ENCODE measurements at regions of chr7 and their contacts with region 1.

Region 1: GRCh38 chr7:3427957-3428356 is 126.9 kb downstream of the SDK1 start:
- DNase-seq: peak in 3 of 14 experiments; percentile 1 to 22 (median 12)
- ATAC-seq: no peak
- H3K4me3 ChIP-seq: no peak overlapping the region
- H3K4me3 Mint-ChIP-seq: peak overlapping the region; percentile 31
- H3K27ac ChIP-seq: no peak overlapping the region
- H3K27ac Mint-ChIP-seq: no peak overlapping the region
- H3K4me1 ChIP-seq: no peaks in the 10 kb centered on the region
- H3K4me1 Mint-ChIP-seq: peaks cover 4% of the 10 kb centered on the region
- H3K27me3 ChIP-seq: no peaks in the 10 kb centered on the region
- H3K27me3 Mint-ChIP-seq: no peaks in the 10 kb centered on the region
- CTCF ChIP-seq: no peak

Region 2: GRCh38 chr7:3356173-3356572 is 71.8 kb before region 1 on chr7:
- CTCF ChIA-PET with region 1: no interaction called
- POLR2A ChIA-PET with region 1: no interaction called
- intact Hi-C with region 1: loop called in 1 of 2 experiments (anchors 2 kb)
- DNase-seq: no peak
- ATAC-seq: no peak
- H3K4me3 ChIP-seq: no peak overlapping the region
- H3K4me3 Mint-ChIP-seq: no peak overlapping the region
- H3K27ac ChIP-seq: no peak overlapping the region
- H3K27ac Mint-ChIP-seq: no peak overlapping the region
- H3K4me1 ChIP-seq: no peaks in the 10 kb centered on the region
- H3K4me1 Mint-ChIP-seq: no peaks in the 10 kb centered on the region
- H3K27me3 ChIP-seq: no peaks in the 10 kb centered on the region
- H3K27me3 Mint-ChIP-seq: peaks cover 5% of the 10 kb centered on the region
- CTCF ChIP-seq: no peak

Region 3: GRCh38 chr7:3461923-3462322 is 34.0 kb after region 1 on chr7:
- CTCF ChIA-PET with region 1: no interaction called
- POLR2A ChIA-PET with region 1: no interaction called
- intact Hi-C with region 1: loop called in 1 of 2 experiments (anchors 5 kb)
- DNase-seq: peak; percentile 45 to 88 (median 64)
- ATAC-seq: peak; percentile 90
- H3K4me3 ChIP-seq: no peak overlapping the region
- H3K4me3 Mint-ChIP-seq: peak overlapping the region; percentile 56
- H3K27ac ChIP-seq: peak overlapping the region; percentile 18 to 46
- H3K27ac Mint-ChIP-seq: peak overlapping the region; percentile 87
- H3K4me1 ChIP-seq: peaks cover 15% of the 10 kb centered on the region
- H3K4me1 Mint-ChIP-seq: peaks cover 59% of the 10 kb centered on the region
- H3K27me3 ChIP-seq: no peaks in the 10 kb centered on the region
- H3K27me3 Mint-ChIP-seq: no peaks in the 10 kb centered on the region
- CTCF ChIP-seq: peak; percentile 14

Region 4: DNA sequence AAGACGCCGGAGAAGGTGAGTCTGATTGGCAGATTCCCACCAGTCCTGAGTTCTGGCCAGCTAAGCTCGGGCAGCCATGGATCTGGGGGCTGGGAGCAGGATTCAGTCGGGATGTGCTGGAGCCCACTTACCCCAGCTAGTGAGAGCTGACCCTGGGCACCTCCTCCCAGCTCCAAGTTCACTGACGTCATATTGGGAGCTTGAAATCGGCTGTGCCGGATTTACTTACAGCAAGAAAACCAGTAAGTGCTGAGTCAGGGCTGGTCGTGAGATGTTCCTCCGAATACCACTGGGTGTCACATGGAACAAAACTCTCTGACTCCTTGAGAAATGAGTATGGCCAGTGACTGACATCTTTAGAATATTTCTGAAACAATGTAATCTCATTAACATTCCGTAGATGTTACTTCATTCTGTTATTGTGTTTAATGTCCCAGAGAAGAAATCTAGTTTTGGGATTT is 494.2 kb after region 1 on chr7:
- CTCF ChIA-PET with region 1: no interaction called
- POLR2A ChIA-PET with region 1: no interaction called
- intact Hi-C with region 1: no loop called
- DNase-seq: no peak
- ATAC-seq: no peak
- H3K4me3 ChIP-seq: no peak overlapping the region
- H3K4me3 Mint-ChIP-seq: no peak overlapping the region
- H3K27ac ChIP-seq: no peak overlapping the region
- H3K27ac Mint-ChIP-seq: no peak overlapping the region
- H3K4me1 ChIP-seq: no peaks in the 10 kb centered on the region
- H3K4me1 Mint-ChIP-seq: peaks cover 7% of the 10 kb centered on the region
- H3K27me3 ChIP-seq: peaks cover 0 to 4% of the 10 kb centered on the region in 2 experiments
- H3K27me3 Mint-ChIP-seq: no peaks in the 10 kb centered on the region
- CTCF ChIP-seq: no peak

Measured in CD4-positive, alpha-beta T cell (primary cell).